Calu3 (cell line): ENCODE measurements at regions of chr12 and their contacts with region 1.

Region 1: GRCh38 chr12:79058331-79058730 is 193.8 kb downstream of the SYT1 start:
- DNase-seq: peak; percentile 44
- H3K4me3 Mint-ChIP-seq: no peak overlapping the region
- H3K27ac Mint-ChIP-seq: peak overlapping the region; percentile 93
- H3K4me1 Mint-ChIP-seq: peaks cover 26% of the 10 kb centered on the region
- H3K27me3 Mint-ChIP-seq: no peaks in the 10 kb centered on the region
- CTCF ChIP-seq: no peak

Region 2: DNA sequence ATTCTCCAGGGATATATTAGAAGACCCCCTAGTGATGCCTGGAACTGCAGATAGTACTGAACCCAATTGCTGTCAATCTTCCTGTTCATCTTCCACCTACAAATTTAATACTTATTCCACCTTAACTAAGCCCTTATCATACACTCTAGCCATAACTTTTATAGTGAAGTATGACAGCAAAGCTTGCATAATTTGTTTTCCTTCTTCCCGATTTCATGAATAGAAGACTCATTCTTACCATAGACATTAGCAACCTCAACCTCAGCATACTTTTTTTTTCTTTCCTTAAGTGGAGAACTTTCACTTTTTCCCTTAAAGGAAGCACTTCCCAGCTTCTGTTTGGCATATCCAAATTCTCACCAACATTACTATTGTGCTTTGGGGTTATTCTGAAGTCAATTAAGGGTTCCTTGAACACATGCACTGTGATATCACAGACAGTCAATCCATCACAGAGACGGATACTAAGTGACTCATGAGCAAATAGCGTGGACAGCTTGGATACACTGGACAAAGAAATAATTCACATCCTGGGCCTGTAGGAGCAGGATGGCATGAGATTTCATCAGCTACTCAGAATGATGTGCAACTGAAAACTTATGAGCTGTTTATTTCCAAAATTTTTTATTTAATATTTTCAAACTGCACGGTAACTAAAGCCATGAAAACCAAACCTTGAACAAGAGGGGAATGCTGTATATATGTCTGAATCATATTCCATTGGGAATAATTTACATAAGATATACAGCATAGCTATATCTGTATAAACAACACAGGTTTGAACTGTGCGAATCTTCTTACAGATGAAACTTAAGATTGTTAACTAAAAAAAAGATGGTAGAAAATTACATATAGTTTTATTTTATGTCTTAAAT is 129.9 kb before region 1 on chr12:
- CTCF ChIA-PET with region 1: no interaction called
- intact Hi-C with region 1: loop called (anchors 5 kb)
- DNase-seq: peak; percentile 47
- H3K4me3 Mint-ChIP-seq: peak overlapping the region; percentile 16
- H3K27ac Mint-ChIP-seq: peak overlapping the region; percentile 94
- H3K4me1 Mint-ChIP-seq: peaks cover 25% of the 10 kb centered on the region
- H3K27me3 Mint-ChIP-seq: no peaks in the 10 kb centered on the region
- CTCF ChIP-seq: no peak